ENCODE measurements at regions of chr11 and their contacts with region 1.

Region 1: DNA sequence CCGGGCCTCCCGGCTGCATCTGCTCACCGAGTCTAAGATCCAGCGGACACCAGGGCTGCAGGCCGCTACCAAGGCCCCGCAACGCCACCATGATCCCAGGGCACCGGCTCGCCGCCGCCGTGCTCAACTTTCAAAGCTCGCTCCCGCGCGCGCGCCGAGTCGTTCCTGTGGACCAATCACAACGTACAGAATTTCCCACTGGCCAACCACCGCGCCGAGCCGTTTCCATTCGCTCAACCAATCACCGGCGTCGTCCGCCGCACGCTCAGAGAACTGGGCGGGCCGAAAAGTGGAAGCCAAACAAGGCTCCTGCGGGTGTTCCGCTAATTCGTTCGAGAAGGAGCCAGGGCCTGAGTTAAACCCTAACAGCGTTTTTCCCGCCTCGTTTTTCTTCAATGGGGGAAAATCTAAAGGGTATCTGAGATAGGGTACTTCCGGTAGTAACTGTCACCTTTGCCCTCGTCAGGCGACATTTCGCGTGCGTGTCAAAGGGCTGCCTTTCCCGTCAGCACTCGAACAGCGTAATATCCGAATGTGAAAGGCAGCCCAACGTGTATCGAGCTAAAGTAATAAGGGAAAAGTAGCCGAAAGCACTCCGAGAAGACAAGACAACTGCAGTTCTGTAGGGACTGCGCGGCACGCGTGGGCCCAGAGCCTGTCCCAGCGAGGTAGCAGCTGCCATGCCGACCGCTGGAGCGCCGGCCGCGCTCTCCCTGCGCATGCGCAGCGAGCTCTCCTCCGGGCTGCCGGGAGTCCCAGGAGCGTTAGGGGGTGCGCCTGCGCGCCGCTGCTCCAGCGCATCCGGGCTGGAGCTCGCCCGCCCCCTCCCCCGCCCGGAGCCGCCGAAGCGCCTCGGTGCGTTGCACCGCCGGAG is at the starts of genes NCAPD3 and VPS26B:
- DNase-seq: peak; percentile 77
- ATAC-seq: peak; percentile 90
- H3K4me3 ChIP-seq: peak within 1 kb of the TSS; percentile 74
- H3K27ac ChIP-seq: peak within 1 kb of the TSS; percentile 91
- H3K4me1 ChIP-seq: peaks cover 19% of the 10 kb centered on the region
- H3K27me3 ChIP-seq: no peaks in the 10 kb centered on the region
- CTCF ChIP-seq: no peak
- EP300 ChIP-seq: no peak
- POLR2A ChIP-seq: peak; percentile 86
- RAD21 ChIP-seq: no peak
- polyA plus RNA-seq, gene NCAPD3: 14.9 to 17.5 TPM
- polyA plus RNA-seq, gene VPS26B: 1.6 to 2.7 TPM

Region 2: DNA sequence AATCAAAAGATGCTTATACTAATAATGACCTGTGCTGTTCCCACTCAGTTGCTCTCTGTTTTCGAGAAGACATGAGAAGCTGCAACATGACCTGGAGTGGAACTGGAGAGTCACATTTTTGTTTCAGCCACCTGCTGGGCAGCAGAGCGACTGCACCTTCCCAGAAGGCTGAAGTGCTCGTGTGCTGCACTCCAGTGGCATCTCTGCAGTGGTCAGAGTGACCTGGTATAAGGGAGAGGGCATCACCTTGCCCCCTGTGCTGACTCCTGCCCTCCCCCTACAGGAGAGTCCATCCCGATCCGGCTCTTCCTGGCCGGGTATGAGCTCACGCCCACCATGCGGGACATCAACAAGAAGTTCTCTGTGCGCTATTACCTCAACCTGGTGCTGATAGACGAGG is 20.6 kb after region 1 on chr11:
- CTCF ChIA-PET with region 1: interaction called, 18 read pairs
- POLR2A ChIA-PET with region 1: interaction called, 3 read pairs
- RAD21 ChIA-PET with region 1: interaction called, 3 read pairs
- SMC1A ChIA-PET with region 1: interaction called, 5 read pairs
- in situ Hi-C with region 1: no loop called
- intact Hi-C with region 1: no loop called
- DNase-seq: no peak
- ATAC-seq: peak; percentile 96
- H3K4me3 ChIP-seq: no peak overlapping the region
- H3K27ac ChIP-seq: no peak overlapping the region
- H3K4me1 ChIP-seq: no peaks in the 10 kb centered on the region
- H3K27me3 ChIP-seq: no peaks in the 10 kb centered on the region
- CTCF ChIP-seq: peak; percentile 63 to 72 (median 63)
- EP300 ChIP-seq: no peak
- POLR2A ChIP-seq: no peak
- RAD21 ChIP-seq: peak; percentile 68

Region 3: GRCh38 chr11:134253188-134253993 is 29.3 kb after region 1 on chr11 and contains the starts of genes ACAD8 and THYN1:
- CTCF ChIA-PET with region 1: interaction called, 4 read pairs
- POLR2A ChIA-PET with region 1: interaction called, 8 read pairs
- RAD21 ChIA-PET with region 1: interaction called, 6 read pairs
- SMC1A ChIA-PET with region 1: interaction called, 8 read pairs
- in situ Hi-C with region 1: no loop called
- intact Hi-C with region 1: loop called (anchors 2 kb)
- DNase-seq: peak; percentile 86
- ATAC-seq: peak; percentile 100
- H3K4me3 ChIP-seq: peak within 1 kb of the TSS; percentile 90
- H3K27ac ChIP-seq: peak within 1 kb of the TSS; percentile 62
- H3K4me1 ChIP-seq: no peaks in the 10 kb centered on the region
- H3K27me3 ChIP-seq: no peaks in the 10 kb centered on the region
- CTCF ChIP-seq: no peak
- EP300 ChIP-seq: no peak
- POLR2A ChIP-seq: peak; percentile 88
- RAD21 ChIP-seq: no peak
- polyA plus RNA-seq, gene ACAD8: 9.9 to 12.8 TPM
- polyA plus RNA-seq, gene THYN1: 212 to 221 TPM

Measured in GM12878 (cell line).